Motor neuron (in vitro differentiated cells): ENCODE measurements at regions of chr1 and their contacts with region 1.

Region 1: GRCh38 chr1:54499360-54500106 is 48.5 kb upstream of the ACOT11 start:
- ATAC-seq: peak; percentile 88 to 95 (median 93)
- H3K4me3 ChIP-seq: peak overlapping the region; percentile 14 to 33 (median 21)
- H3K27ac ChIP-seq: peak overlapping the region; percentile 1 to 32
- H3K4me1 ChIP-seq: peaks cover 20 to 22% of the 10 kb centered on the region in 2 donors

Region 2: GRCh38 chr1:54070171-54070837 is 429.2 kb before region 1 on chr1:
- in situ Hi-C with region 1: loop called in 4 of 9 experiments (anchors 10 to 25 kb)
- ATAC-seq: peak; percentile 82 to 100 (median 91)
- H3K4me3 ChIP-seq: no peak overlapping the region
- H3K27ac ChIP-seq: peak overlapping the region in 1 of 2 donors; percentile 24
- H3K4me1 ChIP-seq: peaks cover 4 to 13% of the 10 kb centered on the region in 2 donors